ENCODE measurements at regions of chr6 and their contacts with region 1.

Region 1: DNA sequence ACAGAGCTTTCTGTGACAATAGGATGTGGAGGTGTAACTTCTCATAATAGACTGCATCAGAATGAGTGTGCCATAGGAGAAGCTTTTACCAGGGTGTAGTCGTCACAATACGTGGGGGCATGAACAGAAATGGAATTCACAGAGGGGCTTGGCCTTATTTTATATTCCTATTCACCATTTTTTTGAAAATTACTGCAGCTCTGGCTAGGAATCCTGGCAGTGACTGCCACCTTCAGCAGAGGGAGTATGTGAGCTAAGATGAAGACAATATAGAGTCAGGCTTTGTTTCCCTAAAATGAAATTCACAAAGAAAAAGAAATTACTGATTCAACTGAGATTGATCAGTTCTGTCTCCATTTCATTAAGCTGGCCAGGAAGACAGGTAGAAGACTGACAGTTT is 13.9 kb downstream of the TOMM6 start:
- DNase-seq: peak; percentile 67
- H3K4me3 ChIP-seq: no peak overlapping the region
- H3K27ac ChIP-seq: no peak overlapping the region
- H3K4me1 ChIP-seq: no peaks in the 10 kb centered on the region
- H3K27me3 ChIP-seq: no peaks in the 10 kb centered on the region
- CTCF ChIP-seq: peak; percentile 65 to 68
- POLR2A ChIP-seq: no peak

Region 2: DNA sequence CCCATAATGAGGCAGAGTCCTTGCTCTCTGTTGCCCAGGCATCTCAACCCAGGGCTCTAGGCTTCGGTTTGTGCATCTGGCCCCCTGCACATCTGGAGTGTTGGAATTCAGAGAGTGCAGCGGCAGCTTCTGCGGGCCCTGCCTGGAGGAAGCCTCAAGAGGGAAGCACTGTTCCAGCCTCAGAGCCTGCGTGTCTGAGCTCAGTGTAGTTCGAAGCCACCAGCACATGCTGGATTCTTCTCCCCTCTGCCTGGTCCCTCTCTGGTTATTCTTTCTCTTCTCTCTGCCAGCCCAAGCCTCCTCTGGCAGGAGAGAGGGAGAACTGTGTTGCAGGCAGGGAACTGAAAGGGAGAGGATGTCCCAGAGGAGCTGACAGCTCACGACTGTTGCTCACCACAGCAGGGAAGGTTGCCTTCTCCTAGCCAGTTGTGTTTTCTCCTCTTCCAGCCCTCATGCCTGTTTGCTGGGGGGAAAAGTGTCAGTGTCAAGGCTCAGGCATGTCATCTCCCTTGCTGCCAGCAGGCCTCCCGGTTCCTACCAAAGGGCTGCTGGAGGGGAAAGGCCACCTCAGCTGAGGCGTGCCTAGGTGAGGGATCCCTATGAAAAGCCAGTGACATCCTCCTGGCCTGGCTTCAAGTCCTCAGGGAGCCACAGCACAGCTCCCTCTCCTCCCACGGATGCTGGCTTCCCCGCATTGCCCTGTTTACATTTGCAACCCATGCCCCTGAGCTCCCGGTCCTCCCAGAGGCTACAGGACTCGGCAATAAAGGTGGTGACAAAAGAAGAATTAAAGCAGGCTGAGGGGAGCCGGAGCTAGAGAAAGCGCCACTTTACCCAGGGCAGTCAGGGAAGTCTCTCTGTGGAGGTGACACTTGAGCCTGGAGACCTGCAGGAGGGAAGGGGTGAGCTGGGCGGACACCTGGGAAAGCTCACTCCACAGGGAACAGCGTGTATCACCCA is 1088.1 kb before region 1 on chr6:
- CTCF ChIA-PET with region 1: no interaction called
- POLR2A ChIA-PET with region 1: no interaction called
- dilution Hi-C with region 1: no loop called
- intact Hi-C with region 1: no loop called
- DNase-seq: no peak
- H3K4me3 ChIP-seq: no peak overlapping the region
- H3K27ac ChIP-seq: no peak overlapping the region
- H3K4me1 ChIP-seq: no peaks in the 10 kb centered on the region
- H3K27me3 ChIP-seq: no peaks in the 10 kb centered on the region
- CTCF ChIP-seq: peak in 1 of 2 donors; percentile 16
- POLR2A ChIP-seq: no peak

Region 3: DNA sequence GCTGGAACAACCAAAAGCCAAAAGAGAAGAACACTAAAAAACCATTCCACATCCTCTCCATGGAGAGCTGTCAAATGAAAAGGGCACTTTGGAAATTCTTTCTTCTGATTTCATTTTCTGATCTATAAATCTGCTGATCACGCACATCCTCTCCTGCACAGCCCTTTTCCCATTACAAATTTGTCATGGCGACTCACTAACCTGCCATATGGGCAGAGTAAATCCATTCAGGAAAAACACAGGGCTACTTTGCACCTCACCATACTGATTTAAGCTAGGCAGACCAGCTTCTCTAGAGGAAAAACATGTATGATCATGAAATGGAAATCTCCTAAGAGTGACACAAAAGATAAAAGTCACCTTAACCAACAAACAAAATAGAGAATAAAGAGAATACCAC is 12.1 kb after region 1 on chr6:
- CTCF ChIA-PET with region 1: interaction called, 15 read pairs
- POLR2A ChIA-PET with region 1: no interaction called
- dilution Hi-C with region 1: no loop called
- intact Hi-C with region 1: no loop called
- DNase-seq: no peak
- H3K4me3 ChIP-seq: no peak overlapping the region
- H3K27ac ChIP-seq: no peak overlapping the region
- H3K4me1 ChIP-seq: peaks cover under 1% of the 10 kb centered on the region
- H3K27me3 ChIP-seq: no peaks in the 10 kb centered on the region
- CTCF ChIP-seq: no peak
- POLR2A ChIP-seq: no peak

Region 4: GRCh38 chr6:41846666-41847237 is 45.4 kb after region 1 on chr6:
- CTCF ChIA-PET with region 1: interaction called, 22 read pairs
- POLR2A ChIA-PET with region 1: no interaction called
- dilution Hi-C with region 1: no loop called
- intact Hi-C with region 1: loop called (anchors 1 kb)
- DNase-seq: peak; percentile 99
- H3K4me3 ChIP-seq: peak overlapping the region in 1 of 3 experiments; percentile 16
- H3K27ac ChIP-seq: peak overlapping the region; percentile 96
- H3K4me1 ChIP-seq: peaks cover 17% of the 10 kb centered on the region
- H3K27me3 ChIP-seq: no peaks in the 10 kb centered on the region
- CTCF ChIP-seq: peak; percentile 79 to 85
- POLR2A ChIP-seq: peak; percentile 46

Region 5: DNA sequence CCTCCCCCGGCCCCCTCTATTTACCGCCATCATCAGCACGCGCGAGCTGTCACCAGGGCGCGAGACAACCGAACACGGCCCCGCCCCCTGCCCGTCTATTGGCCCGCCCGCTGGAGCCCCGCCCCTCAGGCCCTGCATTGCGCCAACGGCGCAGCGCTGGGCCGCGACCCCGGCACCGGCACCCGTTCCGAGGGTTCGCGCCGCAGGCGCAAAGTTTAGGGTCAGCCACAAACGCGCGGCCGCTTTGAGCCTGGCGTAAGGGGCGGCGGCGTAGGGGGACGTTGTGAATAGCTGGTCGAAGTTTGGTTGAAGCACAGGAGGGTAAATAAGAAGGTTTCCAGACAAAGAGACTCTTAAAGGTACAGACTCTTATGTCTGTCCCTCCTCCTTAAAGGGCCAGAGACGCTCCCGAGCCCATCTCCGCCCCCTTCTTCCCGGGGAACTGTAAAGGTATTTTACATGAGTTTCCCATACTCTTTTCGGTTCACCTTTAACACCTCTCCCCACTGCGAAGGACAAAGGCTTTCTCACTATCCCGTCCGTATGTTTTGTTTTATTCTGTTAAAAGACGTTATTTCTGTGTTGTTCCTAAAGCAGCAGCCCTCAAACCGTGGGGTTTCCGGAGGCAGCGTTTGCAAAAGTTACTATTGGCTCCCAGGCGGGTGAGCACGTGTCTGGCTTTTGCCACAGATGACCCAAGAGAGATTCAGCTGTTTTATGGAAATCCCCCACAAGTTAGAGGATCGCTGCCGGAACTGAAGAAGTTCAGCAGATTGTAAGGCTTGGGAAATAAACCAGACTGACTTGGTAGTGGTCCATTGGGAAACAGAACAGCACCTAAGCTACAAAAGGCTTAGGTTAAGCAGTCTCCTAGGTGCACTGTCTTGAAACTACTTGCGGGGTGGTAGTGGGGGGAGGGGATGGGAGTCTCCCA is 94.2 kb after region 1 on chr6 and contains the start of gene USP49:
- CTCF ChIA-PET with region 1: interaction called, 14 read pairs
- POLR2A ChIA-PET with region 1: no interaction called
- dilution Hi-C with region 1: no loop called
- intact Hi-C with region 1: loop called (anchors 1 kb)
- DNase-seq: peak; percentile 89
- H3K4me3 ChIP-seq: peak within 1 kb of the TSS; percentile 70 to 78 (median 72)
- H3K27ac ChIP-seq: peak within 1 kb of the TSS; percentile 84
- H3K4me1 ChIP-seq: peaks cover 12% of the 10 kb centered on the region
- H3K27me3 ChIP-seq: peaks cover 0 to 2% of the 10 kb centered on the region in 2 experiments
- CTCF ChIP-seq: no peak
- POLR2A ChIP-seq: peak; percentile 70
- total RNA-seq, gene USP49: 4.1 and 4.5 TPM in 2 replicates

Region 6: DNA sequence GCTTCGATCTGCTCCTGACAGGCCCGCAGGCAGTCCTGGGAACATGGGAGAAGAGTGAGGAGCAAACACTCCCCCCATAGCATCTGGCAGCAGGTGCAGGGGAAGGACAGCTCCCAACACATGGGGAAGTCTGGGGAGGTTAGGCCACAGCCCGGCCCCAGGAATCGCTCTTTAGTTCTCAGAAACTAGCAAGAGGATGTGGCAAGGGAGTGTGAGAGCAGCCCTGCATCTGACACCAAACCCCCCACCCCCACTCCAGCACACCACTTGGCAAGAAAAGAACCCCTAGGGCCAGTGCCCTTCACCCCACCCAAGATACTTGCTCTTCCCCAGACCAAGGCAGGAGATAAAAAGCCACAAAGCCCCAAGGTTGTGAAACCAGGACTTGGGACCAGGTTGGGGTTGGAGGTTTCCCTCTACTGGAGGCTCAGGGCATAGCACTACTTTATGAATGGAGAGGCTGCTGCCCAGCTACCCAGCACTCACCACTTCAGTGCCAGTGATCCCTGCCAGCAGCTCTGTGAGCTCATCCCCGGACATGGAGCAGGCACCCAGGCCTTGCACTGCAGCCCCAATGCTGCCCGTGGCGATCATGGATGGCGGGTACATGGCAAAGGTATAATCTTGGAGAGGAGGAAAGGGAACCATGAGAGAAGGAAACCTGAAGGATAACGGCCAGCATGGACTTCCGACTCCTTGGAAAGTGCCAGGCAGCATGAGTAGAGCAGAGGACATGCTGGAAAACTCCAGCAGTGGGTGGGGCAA is 134.9 kb after region 1 on chr6:
- CTCF ChIA-PET with region 1: interaction called, 33 read pairs
- POLR2A ChIA-PET with region 1: no interaction called
- dilution Hi-C with region 1: no loop called
- intact Hi-C with region 1: loop called (anchors 1 kb)
- DNase-seq: peak; percentile 82
- H3K4me3 ChIP-seq: no peak overlapping the region
- H3K27ac ChIP-seq: no peak overlapping the region
- H3K4me1 ChIP-seq: peaks cover 27% of the 10 kb centered on the region
- H3K27me3 ChIP-seq: no peaks in the 10 kb centered on the region
- CTCF ChIP-seq: peak; percentile 84 to 86
- POLR2A ChIP-seq: no peak

Region 7: GRCh38 chr6:41941280-41942066 is 140.1 kb after region 1 on chr6 and contains the start of gene CCND3:
- CTCF ChIA-PET with region 1: interaction called, 33 read pairs
- POLR2A ChIA-PET with region 1: no interaction called
- dilution Hi-C with region 1: no loop called
- intact Hi-C with region 1: loop called (anchors 1 kb)
- DNase-seq: peak; percentile 78
- H3K4me3 ChIP-seq: peak within 1 kb of the TSS; percentile 58 to 88 (median 76)
- H3K27ac ChIP-seq: peak within 1 kb of the TSS; percentile 57
- H3K4me1 ChIP-seq: peaks cover 34% of the 10 kb centered on the region
- H3K27me3 ChIP-seq: no peaks in the 10 kb centered on the region
- CTCF ChIP-seq: no peak
- POLR2A ChIP-seq: peak; percentile 69
- total RNA-seq, gene CCND3: 87.5 and 96.7 TPM in 2 replicates

Region 8: GRCh38 chr6:42050266-42051032 is 249.1 kb after region 1 on chr6 and contains the start of gene TAF8:
- CTCF ChIA-PET with region 1: interaction called, 109 read pairs
- POLR2A ChIA-PET with region 1: no interaction called
- dilution Hi-C with region 1: no loop called
- intact Hi-C with region 1: no loop called
- DNase-seq: peak; percentile 92
- H3K4me3 ChIP-seq: peak within 1 kb of the TSS; percentile 83 to 92 (median 87)
- H3K27ac ChIP-seq: peak within 1 kb of the TSS; percentile 77
- H3K4me1 ChIP-seq: peaks cover 32% of the 10 kb centered on the region
- H3K27me3 ChIP-seq: no peaks in the 10 kb centered on the region
- CTCF ChIP-seq: no peak
- POLR2A ChIP-seq: peak; percentile 99
- total RNA-seq, gene TAF8: 32.4 and 32.9 TPM in 2 replicates